ENCODE measurements at regions of chr3 and their contacts with region 1.

Region 1: GRCh38 chr3:94673876-94674275 is 611.0 kb downstream of the NSUN3 start:
- DNase-seq: no peak

Region 2: DNA sequence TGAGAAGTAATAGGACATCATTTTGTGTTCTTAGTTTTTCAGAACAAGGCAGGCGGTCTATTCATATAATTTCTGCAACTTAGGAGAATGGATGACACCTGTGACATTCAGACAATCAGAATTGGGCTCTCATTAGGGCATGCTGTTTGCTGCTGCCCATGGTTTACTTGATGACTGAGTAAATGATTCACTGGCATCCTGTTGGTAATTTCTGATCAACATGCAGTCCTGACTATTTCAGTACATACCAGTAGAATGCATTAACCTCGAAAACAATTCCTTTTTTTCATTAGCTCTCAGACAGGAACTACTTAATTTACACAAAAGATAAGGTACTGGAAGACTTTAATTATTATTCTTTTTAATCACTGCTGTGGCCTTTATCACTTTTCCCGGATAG is 30.6 kb after region 1 on chr3:
- intact Hi-C with region 1: loop called in 1 of 2 experiments (anchors 1 kb)
- DNase-seq: no peak